CD14-positive monocyte (primary cell): ENCODE measurements at regions of chr22 and their contacts with region 1.

Region 1: GRCh38 chr22:30079952-30080533 is at the start of gene HORMAD2:
- DNase-seq: peak; percentile 4 to 23 (median 11)
- H3K4me3 ChIP-seq: peak within 1 kb of the TSS in 1 of 3 experiments; percentile 50
- H3K4me3 Mint-ChIP-seq: peak within 1 kb of the TSS; percentile 71 to 83
- H3K27ac ChIP-seq: no peak within 1 kb of the TSS
- H3K27ac Mint-ChIP-seq: peak within 1 kb of the TSS in 1 of 7 donors; percentile 30
- H3K4me1 ChIP-seq: peaks cover 6 to 7% of the 10 kb centered on the region in 2 donors
- H3K4me1 Mint-ChIP-seq: peaks cover 5% of the 10 kb centered on the region
- H3K27me3 ChIP-seq: peaks cover 5 to 30% of the 10 kb centered on the region in 2 donors
- H3K27me3 Mint-ChIP-seq: peaks cover 18 to 41% (median 18%) of the 10 kb centered on the region in 3 donors
- CTCF ChIP-seq: no peak
- polyA plus RNA-seq, gene HORMAD2: not detected

Region 2: DNA sequence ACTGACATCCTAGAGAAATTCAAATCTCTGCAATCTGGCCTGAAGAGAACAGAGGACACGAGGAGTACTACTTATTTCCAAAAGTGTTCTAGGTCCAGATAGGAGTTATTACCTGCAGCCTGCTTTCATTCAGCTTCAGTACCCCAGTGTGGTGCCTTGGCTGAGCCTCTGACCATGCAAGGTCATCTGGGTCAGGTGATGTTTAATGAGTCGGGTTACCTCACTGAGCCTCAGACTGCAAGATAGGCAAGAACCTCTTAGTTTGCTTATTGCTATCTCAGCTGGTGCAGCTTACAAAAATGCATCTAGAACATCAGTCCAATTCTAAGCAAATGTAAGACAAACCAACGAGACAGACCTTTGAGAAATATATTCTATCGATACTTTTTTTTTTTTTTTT is 486.1 kb before region 1 on chr22:
- intact Hi-C with region 1: loop called in 1 of 2 experiments (anchors 10 kb)
- DNase-seq: no peak
- H3K4me3 ChIP-seq: no peak overlapping the region
- H3K4me3 Mint-ChIP-seq: no peak overlapping the region
- H3K27ac ChIP-seq: no peak overlapping the region
- H3K27ac Mint-ChIP-seq: no peak overlapping the region
- H3K4me1 ChIP-seq: peaks cover 6 to 7% of the 10 kb centered on the region in 2 donors
- H3K4me1 Mint-ChIP-seq: peaks cover 9% of the 10 kb centered on the region
- H3K27me3 ChIP-seq: no peaks in the 10 kb centered on the region
- H3K27me3 Mint-ChIP-seq: peaks cover 0 to 1% (median 0%) of the 10 kb centered on the region in 3 donors
- CTCF ChIP-seq: no peak

Region 3: DNA sequence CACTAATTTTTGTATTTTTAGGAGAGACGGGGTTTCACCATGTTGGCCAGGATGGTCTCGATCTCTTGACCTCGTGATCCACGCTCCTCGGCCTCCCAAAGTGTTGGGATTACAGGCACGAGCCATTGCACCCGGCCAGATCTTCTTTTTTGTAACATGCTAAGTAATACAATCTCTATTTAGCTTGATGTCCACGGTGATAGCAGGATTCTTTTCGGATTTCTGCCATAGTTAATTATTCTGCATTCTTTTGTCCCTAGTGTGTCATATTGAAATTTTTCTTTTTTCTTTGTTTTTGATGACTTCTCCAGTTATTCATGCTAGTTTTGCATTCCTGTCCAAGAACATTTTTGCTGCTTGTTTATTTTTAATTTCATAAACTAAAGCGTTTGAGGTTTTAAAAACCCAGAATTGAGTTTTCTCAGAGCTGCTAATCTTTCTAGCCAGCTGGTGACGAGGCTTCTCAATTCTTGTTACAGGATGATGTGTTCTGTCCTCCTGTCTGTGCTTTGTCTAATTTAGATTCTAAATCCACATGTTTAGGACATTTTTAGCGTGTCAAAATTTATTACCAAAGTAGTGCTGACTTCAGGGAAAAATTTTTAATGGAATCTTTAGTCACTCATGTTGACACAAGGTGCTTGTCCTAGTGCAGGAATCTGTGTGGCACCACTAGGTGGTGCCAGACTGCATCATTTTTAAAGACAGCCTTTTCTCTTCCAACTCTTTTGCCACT is 454.8 kb before region 1 on chr22:
- intact Hi-C with region 1: loop called in 1 of 2 experiments (anchors 10 kb)
- DNase-seq: peak; percentile 29 to 50 (median 45)
- H3K4me3 ChIP-seq: no peak overlapping the region
- H3K4me3 Mint-ChIP-seq: no peak overlapping the region
- H3K27ac ChIP-seq: no peak overlapping the region
- H3K27ac Mint-ChIP-seq: no peak overlapping the region
- H3K4me1 ChIP-seq: peaks cover 32 to 37% of the 10 kb centered on the region in 2 donors
- H3K4me1 Mint-ChIP-seq: peaks cover 50% of the 10 kb centered on the region
- H3K27me3 ChIP-seq: no peaks in the 10 kb centered on the region
- H3K27me3 Mint-ChIP-seq: no peaks in the 10 kb centered on the region
- CTCF ChIP-seq: peak; percentile 83

Region 4: DNA sequence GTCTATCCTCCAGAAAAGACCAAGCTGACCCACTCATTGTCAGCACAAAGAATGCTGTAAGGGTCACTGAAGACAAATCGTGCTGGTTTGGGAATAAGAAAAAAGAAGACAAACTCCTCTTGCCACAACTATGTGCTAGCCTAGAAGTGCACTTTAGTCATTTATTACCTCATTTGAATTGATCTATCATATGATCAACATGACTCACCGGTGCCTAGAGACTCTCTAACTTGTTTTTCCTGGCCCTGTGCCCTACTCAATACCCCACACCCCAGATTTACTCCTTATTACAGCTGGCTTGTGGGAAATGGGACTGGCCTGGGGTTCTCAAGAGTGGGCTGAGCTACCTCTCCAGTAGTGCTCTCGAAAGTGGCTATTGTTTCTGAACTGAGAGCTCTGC is 35.7 kb before region 1 on chr22:
- intact Hi-C with region 1: no loop called
- DNase-seq: no peak
- H3K4me3 ChIP-seq: no peak overlapping the region
- H3K4me3 Mint-ChIP-seq: no peak overlapping the region
- H3K27ac ChIP-seq: no peak overlapping the region
- H3K27ac Mint-ChIP-seq: no peak overlapping the region
- H3K4me1 ChIP-seq: peaks cover 13 to 18% of the 10 kb centered on the region in 2 donors
- H3K4me1 Mint-ChIP-seq: peaks cover 23% of the 10 kb centered on the region
- H3K27me3 ChIP-seq: no peaks in the 10 kb centered on the region
- H3K27me3 Mint-ChIP-seq: peaks cover 0 to 4% (median 2%) of the 10 kb centered on the region in 3 donors
- CTCF ChIP-seq: no peak